ENCODE measurements at regions of chr6 and their contacts with region 1.

Region 1: GRCh38 chr6:11653028-11653583 is 115.6 kb downstream of the TMEM170B start:
- DNase-seq: peak; percentile 55 to 69
- H3K4me3 ChIP-seq: no peak overlapping the region
- H3K27ac ChIP-seq: peak overlapping the region; percentile 15; the same call in 1 of the 2 replicates
- H3K4me1 ChIP-seq: peaks cover 48% of the 10 kb centered on the region
- H3K27me3 ChIP-seq: no peaks in the 10 kb centered on the region
- CTCF ChIP-seq: no peak

Region 2: DNA sequence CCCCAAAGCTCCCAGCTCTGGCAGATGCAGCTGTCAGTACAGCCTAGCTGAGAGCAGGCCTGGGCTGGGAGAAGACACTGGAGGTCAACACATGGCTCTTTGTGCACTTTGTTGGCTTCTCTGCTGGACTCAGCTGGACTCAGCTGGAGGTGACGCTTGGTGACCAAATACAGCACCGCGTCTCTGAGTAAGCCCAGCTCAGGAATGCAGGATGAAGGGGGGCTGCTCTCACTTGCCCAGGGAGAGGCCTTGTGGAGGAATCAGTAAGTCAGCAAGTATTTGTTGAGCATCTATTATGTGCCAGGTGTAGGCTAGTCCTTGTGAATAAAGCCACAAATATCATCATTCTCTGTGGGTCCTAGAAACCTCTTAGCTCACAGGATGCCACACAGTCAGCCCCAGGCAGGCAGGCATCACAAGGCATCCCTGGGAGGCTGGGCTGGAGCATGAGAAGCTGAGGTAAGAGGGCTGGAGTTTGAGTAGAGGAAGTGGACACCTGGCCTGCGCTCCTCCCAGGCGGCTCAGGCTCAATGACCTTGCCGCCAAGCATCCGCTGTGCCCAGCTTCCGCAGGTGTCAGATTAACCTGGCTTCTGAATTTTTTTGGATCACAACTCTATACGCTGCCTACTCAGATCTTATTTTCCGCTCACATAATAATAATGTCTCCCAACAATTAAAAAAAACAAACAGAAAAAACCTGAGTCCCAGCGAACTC is 20.2 kb before region 1 on chr6:
- CTCF ChIA-PET with region 1: no interaction called
- POLR2A ChIA-PET with region 1: no interaction called
- intact Hi-C with region 1: loop called (anchors 1 kb)
- DNase-seq: peak in 1 of 2 experiments; percentile 40
- H3K4me3 ChIP-seq: no peak overlapping the region
- H3K27ac ChIP-seq: peak overlapping the region; percentile 18
- H3K4me1 ChIP-seq: peaks cover 9% of the 10 kb centered on the region
- H3K27me3 ChIP-seq: no peaks in the 10 kb centered on the region
- CTCF ChIP-seq: no peak

Region 3: GRCh38 chr6:11700118-11700718 is 47.1 kb after region 1 on chr6:
- CTCF ChIA-PET with region 1: no interaction called
- POLR2A ChIA-PET with region 1: no interaction called
- intact Hi-C with region 1: loop called (anchors 1 kb)
- DNase-seq: peak in 1 of 2 experiments; percentile 59
- H3K4me3 ChIP-seq: no peak overlapping the region
- H3K27ac ChIP-seq: no peak overlapping the region
- H3K4me1 ChIP-seq: no peaks in the 10 kb centered on the region
- H3K27me3 ChIP-seq: no peaks in the 10 kb centered on the region
- CTCF ChIP-seq: peak; percentile 73

Region 4: GRCh38 chr6:11989386-11989785 is 336.3 kb after region 1 on chr6:
- CTCF ChIA-PET with region 1: no interaction called
- POLR2A ChIA-PET with region 1: no interaction called
- intact Hi-C with region 1: no loop called
- DNase-seq: no peak
- H3K4me3 ChIP-seq: no peak overlapping the region
- H3K27ac ChIP-seq: no peak overlapping the region
- H3K4me1 ChIP-seq: no peaks in the 10 kb centered on the region
- H3K27me3 ChIP-seq: no peaks in the 10 kb centered on the region
- CTCF ChIP-seq: no peak

Region 5: DNA sequence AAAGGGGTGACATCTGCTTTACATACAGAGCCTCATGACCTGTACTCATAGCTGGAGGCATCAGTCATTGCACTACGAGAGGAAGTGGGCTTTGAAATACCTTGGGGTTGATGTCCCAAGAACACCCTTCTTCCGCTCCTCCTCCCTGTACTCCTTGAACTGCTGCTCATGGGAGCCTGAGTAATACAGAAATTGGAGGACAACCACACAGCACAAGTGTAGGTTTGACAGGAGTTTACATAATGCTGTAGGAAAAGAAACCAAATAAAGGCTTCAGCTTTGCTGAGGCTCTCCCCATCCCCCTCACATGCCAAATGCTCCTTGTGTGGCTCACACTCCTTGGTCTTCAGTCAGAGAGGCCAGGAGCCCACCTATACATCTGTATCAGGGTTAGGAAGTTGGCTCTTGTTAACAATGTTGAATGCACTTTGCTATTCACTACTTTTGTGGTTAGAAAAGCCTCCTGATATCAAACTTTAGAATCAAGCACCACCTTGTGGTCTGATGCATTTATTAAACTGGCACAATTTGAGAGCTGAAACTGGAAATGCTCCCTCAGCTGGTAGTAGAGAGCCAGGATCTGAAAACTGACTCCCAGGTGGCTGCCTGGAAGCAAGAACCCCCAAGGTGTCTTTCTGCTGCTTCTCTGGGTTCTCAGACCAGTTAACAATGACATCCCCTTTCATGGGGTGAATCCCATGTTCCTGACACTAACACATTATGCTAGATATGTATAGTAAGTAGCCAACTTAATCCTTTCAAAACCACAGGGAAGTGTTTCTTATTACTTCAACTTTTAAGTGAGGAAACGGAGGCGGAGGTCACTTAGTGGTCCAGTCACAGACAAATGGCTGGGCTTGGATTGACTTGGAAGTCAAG is 580.8 kb after region 1 on chr6:
- CTCF ChIA-PET with region 1: interaction called, 4 read pairs
- POLR2A ChIA-PET with region 1: no interaction called
- intact Hi-C with region 1: loop called (anchors 1 kb)
- DNase-seq: peak; percentile 47 to 84
- H3K4me3 ChIP-seq: no peak overlapping the region
- H3K27ac ChIP-seq: no peak overlapping the region
- H3K4me1 ChIP-seq: peaks cover 5% of the 10 kb centered on the region
- H3K27me3 ChIP-seq: no peaks in the 10 kb centered on the region
- CTCF ChIP-seq: peak; percentile 95

Region 6: GRCh38 chr6:12890171-12890790 is 1237.2 kb after region 1 on chr6:
- CTCF ChIA-PET with region 1: no interaction called
- POLR2A ChIA-PET with region 1: no interaction called
- intact Hi-C with region 1: loop called (anchors 10 kb)
- DNase-seq: peak in 1 of 2 experiments; percentile 15
- H3K4me3 ChIP-seq: no peak overlapping the region
- H3K27ac ChIP-seq: no peak overlapping the region
- H3K4me1 ChIP-seq: no peaks in the 10 kb centered on the region
- H3K27me3 ChIP-seq: peaks cover 21% of the 10 kb centered on the region
- CTCF ChIP-seq: peak; percentile 73

Measured in PC-9 (cell line).